ENCODE measurements at regions of chr14 and their contacts with region 1.

Region 1: DNA sequence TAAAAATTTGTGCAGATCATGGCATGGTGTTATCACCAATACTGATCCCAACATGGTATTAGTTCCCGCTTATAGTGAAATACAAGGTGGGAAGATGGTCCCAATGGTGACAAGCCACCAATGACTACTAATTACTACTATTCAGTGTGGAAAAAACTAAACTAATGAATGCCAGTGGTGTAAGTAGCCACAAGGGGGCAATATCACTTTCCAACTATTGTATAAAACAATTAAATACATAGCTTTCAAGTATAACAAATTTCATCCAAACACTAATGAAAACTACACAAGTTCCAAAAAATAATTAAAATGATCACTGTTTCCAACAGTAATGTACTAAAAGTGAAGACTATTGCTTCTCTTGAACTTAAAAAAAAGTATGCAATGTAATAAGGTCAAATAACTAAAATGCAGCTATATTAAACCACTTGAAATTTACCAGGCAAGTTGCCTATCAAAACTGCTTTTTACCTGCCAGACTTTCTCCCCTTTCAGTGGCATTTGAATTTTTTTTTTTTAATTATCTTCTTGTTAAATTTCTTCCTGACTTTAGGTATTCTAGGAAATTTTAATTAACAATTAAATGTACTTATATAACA is 58.0 kb downstream of the PAPLN start:
- DNase-seq: peak in 1 of 7 donors; percentile 32
- H3K4me3 ChIP-seq: no peak overlapping the region
- H3K27ac ChIP-seq: no peak overlapping the region
- H3K4me1 ChIP-seq: no peaks in the 10 kb centered on the region
- H3K27me3 ChIP-seq: no peaks in the 10 kb centered on the region
- CTCF ChIP-seq: peak; percentile 57 to 78 (median 74)
- POLR2A ChIP-seq: no peak

Region 2: DNA sequence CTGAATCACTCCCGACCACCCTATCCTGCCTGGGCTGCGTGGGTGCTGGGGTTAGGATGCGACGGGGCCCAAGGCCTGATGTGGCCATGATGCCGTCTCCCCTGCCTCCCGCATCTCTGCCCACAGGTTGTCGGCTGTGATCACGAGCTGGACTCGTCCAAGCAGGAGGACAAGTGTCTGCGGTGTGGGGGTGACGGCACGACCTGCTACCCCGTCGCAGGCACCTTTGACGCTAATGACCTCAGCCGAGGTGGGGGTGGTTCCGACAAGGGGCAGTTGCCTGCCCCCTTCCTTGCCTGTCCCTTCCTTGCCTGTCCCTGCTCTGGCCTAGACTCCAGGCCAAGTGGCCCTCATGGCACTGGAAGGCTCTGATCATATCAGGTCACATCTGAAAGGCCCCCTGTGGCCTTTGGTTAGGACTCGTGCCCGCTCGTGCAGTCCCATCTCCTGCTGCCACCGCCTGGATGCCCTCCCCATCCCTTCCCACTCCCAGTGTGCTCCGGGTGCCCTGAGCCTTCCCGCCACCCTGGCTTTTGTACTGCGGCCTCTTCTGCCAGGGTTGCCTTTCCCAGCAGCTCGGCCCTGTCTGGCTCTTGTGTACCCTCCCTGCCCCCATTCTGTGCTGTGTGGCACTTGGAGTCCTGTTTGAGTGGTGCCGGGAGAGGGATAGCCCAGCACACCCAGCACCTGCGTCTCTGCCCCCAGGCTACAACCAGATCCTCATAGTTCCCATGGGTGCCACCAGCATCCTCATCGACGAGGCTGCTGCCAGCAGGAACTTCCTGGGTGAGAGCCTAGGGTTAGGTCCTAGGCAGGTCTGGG is 44.3 kb before region 1 on chr14:
- intact Hi-C with region 1: no loop called
- DNase-seq: no peak
- H3K4me3 ChIP-seq: no peak overlapping the region
- H3K27ac ChIP-seq: no peak overlapping the region
- H3K4me1 ChIP-seq: peaks cover 0 to under 1% of the 10 kb centered on the region in 2 donors
- H3K27me3 ChIP-seq: no peaks in the 10 kb centered on the region
- CTCF ChIP-seq: no peak
- POLR2A ChIP-seq: no peak

Region 3: GRCh38 chr14:73452341-73453186 is 157.3 kb after region 1 on chr14:
- intact Hi-C with region 1: loop called in 1 of 2 experiments (anchors 5 kb)
- DNase-seq: no peak
- H3K4me3 ChIP-seq: no peak overlapping the region
- H3K27ac ChIP-seq: no peak overlapping the region
- H3K4me1 ChIP-seq: peaks cover 4 to 43% of the 10 kb centered on the region in 2 donors
- H3K27me3 ChIP-seq: no peaks in the 10 kb centered on the region
- CTCF ChIP-seq: no peak
- POLR2A ChIP-seq: no peak

Region 4: GRCh38 chr14:73467377-73467776 is 172.1 kb after region 1 on chr14:
- intact Hi-C with region 1: loop called (anchors 5 kb)
- DNase-seq: peak in 2 of 7 donors; percentile 21 to 58
- H3K4me3 ChIP-seq: no peak overlapping the region
- H3K27ac ChIP-seq: no peak overlapping the region
- H3K4me1 ChIP-seq: peaks cover 11 to 31% of the 10 kb centered on the region in 2 donors
- H3K27me3 ChIP-seq: no peaks in the 10 kb centered on the region
- CTCF ChIP-seq: no peak
- POLR2A ChIP-seq: no peak

Region 5: DNA sequence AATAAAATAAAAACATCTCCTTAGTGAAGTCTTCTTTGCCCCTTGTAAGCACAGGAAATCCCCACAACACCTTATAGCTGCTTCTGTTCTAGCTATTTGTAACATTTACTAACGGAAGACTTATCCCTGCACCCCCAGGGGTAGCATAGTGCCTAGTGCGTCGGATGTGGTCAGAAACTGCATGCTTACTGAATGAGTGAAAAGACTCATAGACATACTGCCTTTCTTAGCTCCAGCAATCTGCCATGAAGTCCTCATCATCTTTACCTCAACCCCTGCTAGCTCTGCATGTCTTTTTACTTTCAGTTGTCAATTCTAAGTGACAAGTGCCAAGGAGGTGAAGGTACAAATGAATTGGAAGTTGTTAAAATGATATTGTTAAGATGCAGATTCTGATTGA is 208.4 kb after region 1 on chr14:
- intact Hi-C with region 1: no loop called
- DNase-seq: no peak
- H3K4me3 ChIP-seq: no peak overlapping the region
- H3K27ac ChIP-seq: no peak overlapping the region
- H3K4me1 ChIP-seq: no peaks in the 10 kb centered on the region
- H3K27me3 ChIP-seq: no peaks in the 10 kb centered on the region
- CTCF ChIP-seq: no peak
- POLR2A ChIP-seq: no peak

Measured in adrenal gland (tissue), 19 donors.